ENCODE measurements at regions of chr10 and their contacts with region 1.

Region 1: DNA sequence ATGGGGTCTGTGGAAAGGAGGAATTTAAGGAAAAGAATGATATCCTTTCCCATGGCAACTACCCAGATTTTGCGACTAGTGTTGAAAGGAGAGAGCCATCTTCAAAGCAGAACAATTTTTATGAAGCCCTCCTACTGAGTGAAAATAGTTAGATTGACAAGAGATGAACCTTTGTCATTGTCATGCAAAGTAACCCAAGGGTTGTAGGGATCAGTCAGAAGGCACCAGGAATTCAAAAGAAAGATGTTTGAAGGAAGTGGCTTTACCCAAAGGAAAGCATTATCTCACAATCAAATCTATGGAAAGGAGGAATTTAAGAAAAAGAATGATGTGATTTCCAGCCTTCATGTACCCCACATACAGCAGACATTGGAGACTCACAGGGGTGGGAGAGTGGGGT is 544.4 kb downstream of the IPMK start:
- DNase-seq: no peak
- ATAC-seq: no peak
- H3K4me3 ChIP-seq: no peak overlapping the region
- H3K27ac ChIP-seq: no peak overlapping the region
- H3K4me1 ChIP-seq: no peaks in the 10 kb centered on the region
- H3K27me3 ChIP-seq: peaks cover 3% of the 10 kb centered on the region; the same call in 1 of the 2 replicates
- CTCF ChIP-seq: no peak

Region 2: DNA sequence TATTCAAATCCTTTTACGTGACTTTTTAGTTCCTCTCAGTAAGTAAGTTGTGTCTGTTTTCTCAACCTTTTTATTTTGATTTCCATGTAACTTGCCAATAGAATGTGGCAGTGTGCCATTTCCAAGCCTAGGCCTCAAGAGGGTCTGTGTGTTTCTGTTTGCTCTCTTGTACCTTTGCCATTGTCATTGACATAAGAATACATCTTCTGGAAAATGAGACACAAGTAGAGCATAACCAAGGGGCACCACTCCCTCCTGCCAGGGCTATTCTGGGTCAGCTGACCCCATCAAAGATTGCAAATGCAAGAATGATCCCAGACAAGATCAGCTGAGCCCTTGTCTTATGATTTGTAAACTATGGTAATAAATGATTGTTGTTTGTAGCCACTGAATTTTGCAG is 20.4 kb after region 1 on chr10:
- CTCF ChIA-PET with region 1: no interaction called
- POLR2A ChIA-PET with region 1: no interaction called
- intact Hi-C with region 1: loop called (anchors 2 kb)
- DNase-seq: no peak
- ATAC-seq: no peak
- H3K4me3 ChIP-seq: no peak overlapping the region
- H3K27ac ChIP-seq: no peak overlapping the region
- H3K4me1 ChIP-seq: no peaks in the 10 kb centered on the region
- H3K27me3 ChIP-seq: no peaks in the 10 kb centered on the region
- CTCF ChIP-seq: no peak

Measured in PC-3 (cell line).